ENCODE measurements at regions of chr13 and their contacts with region 1.

Region 1: GRCh38 chr13:77779552-77780272 is 82.2 kb downstream of the SLAIN1 start:
- DNase-seq: peak; percentile 61
- H3K4me3 Mint-ChIP-seq: no peak overlapping the region
- H3K27ac Mint-ChIP-seq: peak overlapping the region; percentile 57
- H3K4me1 Mint-ChIP-seq: peaks cover 12% of the 10 kb centered on the region
- H3K27me3 Mint-ChIP-seq: peaks cover 10% of the 10 kb centered on the region

Region 2: GRCh38 chr13:77810430-77810829 is 30.7 kb after region 1 on chr13:
- CTCF ChIA-PET with region 1: interaction called, 3 read pairs
- intact Hi-C with region 1: loop called (anchors 1 kb)
- DNase-seq: peak; percentile 11
- H3K4me3 Mint-ChIP-seq: no peak overlapping the region
- H3K27ac Mint-ChIP-seq: no peak overlapping the region
- H3K4me1 Mint-ChIP-seq: peaks cover 4% of the 10 kb centered on the region
- H3K27me3 Mint-ChIP-seq: peaks cover 9% of the 10 kb centered on the region